CD4-positive, alpha-beta memory T cell (primary cell): ENCODE measurements at regions of chr16 and their contacts with region 1.

Region 1: GRCh38 chr16:84754353-84754856 is 54.6 kb downstream of the USP10 start:
- DNase-seq: peak; percentile 82 to 87 (median 84)
- H3K4me3 ChIP-seq: no peak overlapping the region
- H3K4me3 Mint-ChIP-seq: peak overlapping the region; percentile 45 to 81 (median 75)
- H3K27ac ChIP-seq: peak overlapping the region; percentile 44
- H3K27ac Mint-ChIP-seq: peak overlapping the region; percentile 43 to 94 (median 88)
- H3K4me1 ChIP-seq: peaks cover 83% of the 10 kb centered on the region
- H3K4me1 Mint-ChIP-seq: peaks cover 69 to 94% (median 85%) of the 10 kb centered on the region in 4 donors
- H3K27me3 ChIP-seq: no peaks in the 10 kb centered on the region
- H3K27me3 Mint-ChIP-seq: no peaks in the 10 kb centered on the region

Region 2: DNA sequence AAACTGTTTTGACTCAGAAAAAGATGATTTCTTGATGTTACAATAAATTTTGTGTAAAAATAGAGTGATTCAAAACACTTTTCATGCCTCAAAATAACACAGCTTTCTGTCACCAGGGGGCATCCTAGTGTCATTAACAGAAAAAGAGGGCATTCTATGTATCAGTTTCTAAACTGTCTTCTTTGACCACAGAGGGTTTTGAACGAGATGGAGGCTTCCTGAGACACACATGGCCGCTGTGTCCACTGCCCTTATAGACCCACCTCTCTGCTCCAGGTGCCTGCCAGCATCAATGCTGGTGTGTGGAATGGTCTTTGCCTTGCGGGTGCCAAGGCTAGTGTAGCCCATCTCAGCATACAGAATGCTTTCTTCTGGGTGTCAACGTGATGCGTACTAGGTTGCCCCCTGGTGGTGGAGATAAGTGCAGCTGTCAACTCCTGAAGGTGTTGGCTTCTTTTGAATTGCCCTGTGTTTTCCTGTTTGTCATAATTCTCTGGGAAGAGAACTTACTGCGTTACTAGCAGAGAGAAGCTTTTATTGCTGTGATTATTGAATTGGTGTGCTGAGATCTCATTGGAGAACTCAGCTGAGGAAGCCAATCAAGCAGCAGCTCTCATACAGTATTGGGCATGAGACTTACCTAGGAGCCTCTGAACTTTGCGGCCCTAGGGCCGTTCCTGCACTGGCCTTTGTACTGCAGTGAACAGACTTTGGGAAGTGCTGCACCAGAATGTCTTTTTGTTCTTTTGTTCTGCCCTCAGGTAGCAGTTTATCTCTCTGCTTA is 16.0 kb before region 1 on chr16:
- CTCF ChIA-PET with region 1: interaction called, 122 read pairs
- POLR2A ChIA-PET with region 1: interaction called, 9 read pairs
- intact Hi-C with region 1: no loop called
- DNase-seq: peak; percentile 75 to 82 (median 78)
- H3K4me3 ChIP-seq: no peak overlapping the region
- H3K4me3 Mint-ChIP-seq: peak overlapping the region; percentile 27 to 80 (median 64)
- H3K27ac ChIP-seq: no peak overlapping the region
- H3K27ac Mint-ChIP-seq: peak overlapping the region; percentile 2 to 87 (median 80)
- H3K4me1 ChIP-seq: peaks cover 33% of the 10 kb centered on the region
- H3K4me1 Mint-ChIP-seq: peaks cover 36 to 53% (median 43%) of the 10 kb centered on the region in 4 donors
- H3K27me3 ChIP-seq: no peaks in the 10 kb centered on the region
- H3K27me3 Mint-ChIP-seq: no peaks in the 10 kb centered on the region

Region 3: DNA sequence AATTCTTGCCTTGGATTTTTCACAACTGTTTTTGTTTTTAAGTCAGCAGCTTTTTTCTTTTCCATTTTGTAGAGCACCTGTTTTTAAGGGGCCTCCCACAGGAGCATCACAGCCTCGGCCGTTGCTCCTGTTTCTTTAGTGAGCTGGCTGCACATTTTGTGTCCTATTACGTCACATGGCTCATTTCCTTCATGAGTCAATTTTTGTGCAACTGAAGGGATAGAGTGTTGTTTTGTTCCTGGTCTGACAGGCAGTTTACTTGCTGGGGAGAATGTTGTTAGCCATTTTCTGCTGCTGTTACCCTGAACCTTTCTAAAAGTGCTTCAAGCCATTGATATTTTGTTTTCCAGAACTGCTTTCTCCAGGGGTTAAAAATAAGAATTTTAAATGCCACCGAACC is 20.4 kb after region 1 on chr16:
- CTCF ChIA-PET with region 1: interaction called, 30 read pairs
- POLR2A ChIA-PET with region 1: interaction called, 45 read pairs
- intact Hi-C with region 1: no loop called
- DNase-seq: no peak
- H3K4me3 ChIP-seq: no peak overlapping the region
- H3K4me3 Mint-ChIP-seq: no peak overlapping the region
- H3K27ac ChIP-seq: no peak overlapping the region
- H3K27ac Mint-ChIP-seq: peak overlapping the region in 5 of 7 donors; percentile 6 to 90 (median 57)
- H3K4me1 ChIP-seq: no peaks in the 10 kb centered on the region
- H3K4me1 Mint-ChIP-seq: peaks cover under 1 to 13% (median 4%) of the 10 kb centered on the region in 4 donors
- H3K27me3 ChIP-seq: no peaks in the 10 kb centered on the region
- H3K27me3 Mint-ChIP-seq: no peaks in the 10 kb centered on the region

Region 4: DNA sequence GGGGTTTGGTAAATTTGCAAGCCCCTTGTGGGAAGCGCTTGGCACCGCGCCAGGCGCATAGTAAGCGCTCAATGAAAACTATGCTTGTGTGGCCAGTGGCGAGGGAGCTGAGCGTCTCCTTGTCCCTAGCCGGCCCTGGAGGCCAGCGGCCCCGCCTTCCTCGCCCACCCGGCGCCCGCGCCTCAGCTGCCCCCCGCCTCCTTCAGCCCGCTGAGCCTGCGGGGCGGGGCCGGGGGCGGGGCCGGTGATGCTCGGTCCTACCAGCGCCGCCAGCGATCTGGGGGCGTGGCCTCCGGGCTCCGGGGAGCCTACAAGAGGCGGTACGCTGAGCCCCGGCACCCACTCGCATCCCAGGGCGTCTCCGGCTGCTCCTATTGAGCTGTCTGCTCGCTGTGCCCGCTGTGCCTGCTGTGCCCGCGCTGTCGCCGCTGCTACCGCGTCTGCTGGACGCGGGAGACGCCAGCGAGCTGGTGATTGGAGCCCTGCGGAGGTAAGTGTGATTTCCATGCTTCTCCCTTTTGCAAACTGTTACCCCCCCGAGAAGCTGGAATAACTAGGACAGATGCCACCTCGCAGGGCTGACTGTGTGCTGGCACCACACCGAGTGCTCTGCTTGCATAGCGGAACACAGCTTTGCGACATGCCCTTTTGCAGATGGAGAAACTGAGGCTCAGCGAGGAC is 65.4 kb after region 1 on chr16 and contains the start of gene CRISPLD2:
- CTCF ChIA-PET with region 1: interaction called, 6 read pairs
- POLR2A ChIA-PET with region 1: interaction called, 5 read pairs
- intact Hi-C with region 1: loop called (anchors 1 kb)
- DNase-seq: peak; percentile 81 to 90 (median 87)
- H3K4me3 ChIP-seq: peak within 1 kb of the TSS; percentile 14 to 41
- H3K4me3 Mint-ChIP-seq: peak within 1 kb of the TSS; percentile 65 to 90 (median 84)
- H3K27ac ChIP-seq: no peak within 1 kb of the TSS
- H3K27ac Mint-ChIP-seq: peak within 1 kb of the TSS in 4 of 7 donors; percentile 6 to 67 (median 52)
- H3K4me1 ChIP-seq: peaks cover 18% of the 10 kb centered on the region
- H3K4me1 Mint-ChIP-seq: peaks cover 8 to 41% (median 14%) of the 10 kb centered on the region in 4 donors
- H3K27me3 ChIP-seq: no peaks in the 10 kb centered on the region
- H3K27me3 Mint-ChIP-seq: peaks cover 10 to 14% of the 10 kb centered on the region in 2 donors
- total RNA-seq, gene CRISPLD2: 0.32 to 0.89 TPM

Region 5: GRCh38 chr16:84905966-84906460 is 151.6 kb after region 1 on chr16:
- CTCF ChIA-PET with region 1: no interaction called
- POLR2A ChIA-PET with region 1: no interaction called
- intact Hi-C with region 1: no loop called
- DNase-seq: no peak
- H3K4me3 ChIP-seq: no peak overlapping the region
- H3K4me3 Mint-ChIP-seq: no peak overlapping the region
- H3K27ac ChIP-seq: no peak overlapping the region
- H3K27ac Mint-ChIP-seq: no peak overlapping the region
- H3K4me1 ChIP-seq: no peaks in the 10 kb centered on the region
- H3K4me1 Mint-ChIP-seq: peaks cover 0 to 4% (median 0%) of the 10 kb centered on the region in 4 donors
- H3K27me3 ChIP-seq: no peaks in the 10 kb centered on the region
- H3K27me3 Mint-ChIP-seq: peaks cover 1% of the 10 kb centered on the region in 2 donors

Region 6: GRCh38 chr16:84919269-84919668 is 164.9 kb after region 1 on chr16:
- CTCF ChIA-PET with region 1: no interaction called
- POLR2A ChIA-PET with region 1: no interaction called
- intact Hi-C with region 1: no loop called
- DNase-seq: no peak
- H3K4me3 ChIP-seq: no peak overlapping the region
- H3K4me3 Mint-ChIP-seq: no peak overlapping the region
- H3K27ac ChIP-seq: no peak overlapping the region
- H3K27ac Mint-ChIP-seq: no peak overlapping the region
- H3K4me1 ChIP-seq: no peaks in the 10 kb centered on the region
- H3K4me1 Mint-ChIP-seq: peaks cover 0 to 2% (median 0%) of the 10 kb centered on the region in 4 donors
- H3K27me3 ChIP-seq: no peaks in the 10 kb centered on the region
- H3K27me3 Mint-ChIP-seq: peaks cover 13 to 25% of the 10 kb centered on the region in 2 donors

Region 7: DNA sequence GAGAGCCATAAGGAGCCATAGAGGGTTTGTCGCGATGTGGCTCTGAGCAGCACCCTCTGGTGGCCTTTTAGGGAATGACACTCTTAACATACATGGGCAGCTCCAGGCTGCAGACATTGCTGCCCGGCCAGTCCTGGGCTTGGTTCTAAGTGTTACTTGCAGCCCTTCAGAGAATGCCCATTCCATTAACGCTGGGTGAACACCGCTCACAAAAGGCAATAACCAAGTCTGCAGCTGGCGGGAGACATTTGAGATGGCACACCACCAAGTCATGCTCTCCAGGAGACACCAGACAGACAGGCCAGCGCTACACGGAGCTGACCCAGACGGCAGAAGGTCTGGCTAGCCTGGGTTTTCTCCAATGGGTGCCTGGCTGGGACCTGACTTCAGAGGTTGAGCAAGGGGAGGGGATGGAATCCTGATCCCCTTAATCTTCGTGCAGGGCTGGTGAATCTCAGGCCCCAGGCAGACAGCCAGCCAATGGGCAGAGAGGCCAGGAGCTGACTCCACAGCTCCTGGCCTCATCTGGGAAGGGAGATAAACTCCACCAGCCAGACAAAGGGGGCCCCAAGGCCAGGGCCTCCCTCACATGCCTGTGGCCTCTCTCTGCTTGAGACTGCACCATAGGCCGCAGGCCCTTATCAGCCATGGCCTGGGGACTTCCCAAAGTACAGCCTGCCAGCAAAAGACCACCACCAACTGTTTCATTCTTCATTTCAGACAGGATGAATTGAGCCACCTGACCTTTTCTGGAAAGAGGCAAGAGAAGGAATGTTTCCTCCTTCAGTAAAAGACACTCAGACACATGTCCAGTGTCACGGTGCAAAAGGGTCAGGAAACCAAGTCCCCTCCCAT is 198.2 kb after region 1 on chr16:
- CTCF ChIA-PET with region 1: interaction called, 289 read pairs
- POLR2A ChIA-PET with region 1: interaction called, 45 read pairs
- intact Hi-C with region 1: loop called (anchors 1 kb)
- DNase-seq: peak; percentile 69 to 76 (median 73)
- H3K4me3 ChIP-seq: no peak overlapping the region
- H3K4me3 Mint-ChIP-seq: no peak overlapping the region
- H3K27ac ChIP-seq: no peak overlapping the region
- H3K27ac Mint-ChIP-seq: peak overlapping the region in 4 of 7 donors; percentile 25 to 77 (median 58)
- H3K4me1 ChIP-seq: peaks cover 13% of the 10 kb centered on the region
- H3K4me1 Mint-ChIP-seq: peaks cover 0 to 6% (median 5%) of the 10 kb centered on the region in 4 donors
- H3K27me3 ChIP-seq: no peaks in the 10 kb centered on the region
- H3K27me3 Mint-ChIP-seq: peaks cover 0 to 6% of the 10 kb centered on the region in 2 donors

Region 8: GRCh38 chr16:85086347-85087291 is 332.2 kb after region 1 on chr16:
- CTCF ChIA-PET with region 1: interaction called, 10 read pairs
- POLR2A ChIA-PET with region 1: no interaction called
- intact Hi-C with region 1: loop called (anchors 2 kb)
- DNase-seq: peak; percentile 70 to 80 (median 75)
- H3K4me3 ChIP-seq: no peak overlapping the region
- H3K4me3 Mint-ChIP-seq: no peak overlapping the region
- H3K27ac ChIP-seq: no peak overlapping the region
- H3K27ac Mint-ChIP-seq: peak overlapping the region in 5 of 7 donors; percentile 24 to 62 (median 41)
- H3K4me1 ChIP-seq: no peaks in the 10 kb centered on the region
- H3K4me1 Mint-ChIP-seq: peaks cover 2 to 11% (median 8%) of the 10 kb centered on the region in 4 donors
- H3K27me3 ChIP-seq: no peaks in the 10 kb centered on the region
- H3K27me3 Mint-ChIP-seq: no peaks in the 10 kb centered on the region